ENCODE measurements at regions of chr4 and their contacts with region 1.

Region 1: DNA sequence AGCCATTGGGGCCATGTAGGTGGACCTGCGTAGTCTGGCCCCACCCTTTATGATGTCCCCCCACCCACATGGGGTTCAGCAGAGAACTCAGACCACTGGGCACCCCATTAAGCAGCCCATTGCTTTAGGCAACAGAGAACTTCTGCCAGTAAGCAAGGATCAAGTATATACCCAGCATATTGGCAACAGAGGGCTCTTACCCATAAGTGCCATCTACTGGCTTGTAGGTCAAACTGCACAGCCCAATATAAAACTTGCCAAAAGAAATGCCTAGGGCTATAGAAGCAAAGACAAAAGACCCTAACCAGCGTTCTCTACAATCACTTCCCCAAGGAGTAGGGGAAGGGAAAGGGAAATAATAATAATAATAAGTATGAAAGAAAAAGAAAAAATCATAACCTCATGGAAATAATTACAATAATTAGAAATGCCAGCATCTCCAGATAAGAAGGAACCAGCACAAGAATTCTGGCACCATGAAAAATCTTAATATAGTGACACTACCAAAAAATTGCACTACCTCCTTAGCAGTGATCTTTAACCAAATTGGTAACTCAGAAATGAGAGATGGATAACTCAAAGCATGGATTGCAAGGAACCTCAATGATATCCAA is 1090.7 kb downstream of the FAT4 start:
- DNase-seq: no peak
- ATAC-seq: no peak

Region 2: DNA sequence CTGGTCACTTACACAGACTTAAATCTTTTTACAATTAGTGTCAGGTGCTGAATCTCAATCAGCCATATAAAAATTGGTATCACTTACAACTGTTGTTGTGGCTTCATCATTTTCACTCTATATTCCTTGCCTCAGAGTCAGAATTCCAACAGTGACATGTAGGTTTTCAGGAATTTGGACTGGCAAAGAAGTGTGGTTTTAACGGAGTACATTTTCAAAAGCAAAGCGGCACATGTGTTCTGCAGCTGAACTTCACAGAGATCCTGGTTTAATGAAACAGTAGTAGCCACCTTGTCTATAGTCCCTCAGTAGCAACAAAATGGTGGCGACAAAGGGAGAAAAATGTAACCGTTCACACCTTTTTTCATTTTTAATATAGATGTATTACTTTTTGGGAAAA is 604.1 kb before region 1 on chr4:
- intact Hi-C with region 1: no loop called
- DNase-seq: no peak
- ATAC-seq: no peak

Region 3: DNA sequence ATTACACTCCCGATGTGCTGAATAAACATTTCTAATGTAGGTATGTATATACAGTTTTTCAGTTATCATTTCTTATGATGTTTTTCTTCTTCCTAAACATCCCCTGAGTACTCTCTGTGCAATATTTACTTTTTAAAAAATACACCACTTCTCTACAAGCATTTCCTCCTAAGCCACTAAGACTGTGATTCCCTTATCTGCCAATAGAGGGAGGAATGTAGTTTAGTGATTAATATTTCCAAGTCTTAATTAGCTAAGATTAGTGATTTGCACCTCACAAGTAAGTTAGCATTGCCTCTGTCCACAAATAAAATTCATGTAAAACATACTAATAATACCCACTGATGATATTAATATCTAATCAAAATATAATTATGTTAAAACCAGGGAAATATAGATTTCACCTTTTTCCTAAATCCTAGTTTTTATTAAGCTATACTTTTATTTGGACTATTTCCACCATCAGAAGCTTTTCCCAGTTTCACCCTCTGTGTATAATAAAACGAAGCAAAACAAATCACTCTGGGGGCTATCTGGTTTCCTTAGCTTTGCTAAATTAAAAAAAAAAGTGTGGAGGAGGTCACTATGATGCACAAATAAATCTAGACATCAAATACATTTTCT is 181.6 kb before region 1 on chr4:
- intact Hi-C with region 1: loop called (anchors 10 kb)
- DNase-seq: no peak
- ATAC-seq: no peak

Region 4: GRCh38 chr4:126354784-126355183 is 50.7 kb before region 1 on chr4:
- intact Hi-C with region 1: no loop called
- DNase-seq: no peak
- ATAC-seq: no peak